ENCODE measurements at regions of chr7 and their contacts with region 1.

Region 1: GRCh38 chr7:140175221-140176121 is 1.3 kb downstream of the KDM7A start:
- DNase-seq: peak; percentile 91
- H3K4me3 ChIP-seq: peak overlapping the region; percentile 73
- H3K27ac ChIP-seq: peak overlapping the region; percentile 48
- H3K4me1 ChIP-seq: peaks cover 5% of the 10 kb centered on the region
- CTCF ChIP-seq: peak; percentile 94

Region 2: DNA sequence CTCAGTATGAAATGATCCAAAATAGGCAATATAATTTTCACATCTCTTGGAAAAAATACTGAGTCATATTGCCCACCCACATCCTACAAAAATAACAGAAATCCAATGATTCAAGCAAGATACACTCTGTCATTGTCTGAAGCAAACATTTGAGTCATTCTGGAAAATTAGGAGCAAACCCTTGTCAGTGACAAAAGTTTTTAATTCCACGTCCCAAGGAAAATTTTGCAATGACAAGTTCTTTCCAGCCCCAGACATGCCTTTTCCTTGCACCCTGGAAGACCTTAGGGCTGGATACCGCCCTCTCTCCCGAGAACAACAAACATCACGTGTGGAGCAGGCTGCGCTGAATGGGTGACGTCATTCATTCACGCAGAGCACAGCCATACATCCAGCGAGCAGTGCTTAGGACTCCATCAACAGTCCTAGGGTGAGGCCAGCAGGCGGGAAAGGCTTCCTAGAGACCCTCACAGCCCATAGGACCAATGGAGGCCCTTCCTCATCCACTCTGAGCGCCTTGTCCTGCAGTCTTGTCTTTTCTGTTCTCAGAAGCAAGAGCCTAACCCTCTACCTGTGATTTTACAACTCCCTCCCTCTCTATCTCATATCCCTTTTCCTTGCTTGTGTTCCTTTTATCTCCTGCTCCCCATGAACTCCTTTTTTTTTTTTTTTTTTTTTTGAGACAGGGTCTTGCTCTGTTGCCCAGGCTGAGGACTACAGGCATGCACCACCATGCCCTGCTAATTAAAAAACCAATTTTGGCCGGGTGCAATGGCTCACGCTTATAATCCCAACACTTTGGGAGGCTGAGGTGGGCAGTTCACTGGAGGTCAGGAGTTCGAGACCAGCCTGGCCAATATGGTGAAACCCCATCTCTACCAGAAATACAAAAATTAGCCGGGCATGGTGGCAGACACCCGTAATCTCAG is 24.9 kb after region 1 on chr7:
- CTCF ChIA-PET with region 1: no interaction called
- POLR2A ChIA-PET with region 1: no interaction called
- intact Hi-C with region 1: no loop called
- DNase-seq: no peak
- H3K4me3 ChIP-seq: no peak overlapping the region
- H3K27ac ChIP-seq: no peak overlapping the region
- H3K4me1 ChIP-seq: peaks cover 3% of the 10 kb centered on the region
- CTCF ChIP-seq: no peak

Region 3: DNA sequence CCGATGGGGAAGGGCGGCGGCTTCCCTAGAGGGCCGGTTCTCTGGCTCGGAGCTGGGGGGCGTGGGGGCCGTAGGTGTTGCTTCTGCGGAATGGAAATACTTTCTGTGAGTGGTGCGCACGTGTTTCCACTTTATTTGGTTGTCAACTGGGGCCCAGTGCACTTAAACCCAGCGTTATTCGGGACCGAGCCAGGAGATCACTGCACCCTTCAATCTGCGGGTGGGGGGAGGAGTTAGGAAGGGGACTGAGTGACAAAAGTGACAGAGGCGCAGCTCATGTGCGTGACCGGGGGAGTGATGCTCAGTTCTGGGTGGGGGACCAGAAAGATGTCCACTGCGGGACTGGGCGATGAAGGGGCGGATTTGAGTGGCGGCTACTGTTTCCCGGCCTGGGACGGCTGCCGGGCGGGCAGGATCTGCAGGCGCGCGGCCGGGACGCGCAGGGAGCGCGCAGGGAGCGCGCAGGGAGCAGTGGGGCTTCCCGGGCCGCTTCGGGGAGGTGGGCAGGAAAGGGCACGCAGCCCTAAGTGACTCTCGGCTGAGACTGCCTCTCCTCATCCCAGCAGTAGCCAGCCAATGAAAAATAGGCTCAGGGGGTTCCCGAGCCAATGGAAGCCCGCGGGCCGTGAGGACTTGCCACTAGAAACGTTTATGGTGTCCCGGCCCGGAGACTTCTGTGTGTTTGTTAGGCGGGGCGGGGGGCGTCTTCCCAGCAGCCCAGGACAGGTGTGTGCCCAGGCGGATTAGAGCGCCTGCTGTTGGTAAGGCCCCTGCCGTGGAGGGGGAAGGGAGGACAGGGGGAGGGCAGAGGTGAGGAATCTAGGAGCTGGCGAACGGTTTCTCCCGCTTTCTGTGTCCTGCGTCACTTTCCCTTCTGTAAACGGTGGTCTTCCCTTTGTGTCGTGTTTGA is 55.6 kb after region 1 on chr7:
- CTCF ChIA-PET with region 1: no interaction called
- POLR2A ChIA-PET with region 1: no interaction called
- intact Hi-C with region 1: loop called (anchors 5 kb)
- DNase-seq: no peak
- H3K4me3 ChIP-seq: no peak overlapping the region
- H3K27ac ChIP-seq: no peak overlapping the region
- H3K4me1 ChIP-seq: no peaks in the 10 kb centered on the region
- CTCF ChIP-seq: no peak

Region 4: GRCh38 chr7:140284062-140284461 is 108.6 kb after region 1 on chr7:
- CTCF ChIA-PET with region 1: no interaction called
- POLR2A ChIA-PET with region 1: no interaction called
- intact Hi-C with region 1: no loop called
- DNase-seq: no peak
- H3K4me3 ChIP-seq: no peak overlapping the region
- H3K27ac ChIP-seq: no peak overlapping the region
- H3K4me1 ChIP-seq: no peaks in the 10 kb centered on the region
- CTCF ChIP-seq: no peak

Region 5: GRCh38 chr7:140326116-140326928 is 150.9 kb after region 1 on chr7:
- CTCF ChIA-PET with region 1: no interaction called
- POLR2A ChIA-PET with region 1: no interaction called
- intact Hi-C with region 1: loop called (anchors 1 kb)
- DNase-seq: peak; percentile 60
- H3K4me3 ChIP-seq: no peak overlapping the region
- H3K27ac ChIP-seq: no peak overlapping the region
- H3K4me1 ChIP-seq: no peaks in the 10 kb centered on the region
- CTCF ChIP-seq: peak; percentile 79

Region 6: GRCh38 chr7:140390466-140391190 is 215.2 kb after region 1 on chr7:
- CTCF ChIA-PET with region 1: no interaction called
- POLR2A ChIA-PET with region 1: no interaction called
- intact Hi-C with region 1: loop called (anchors 5 kb)
- DNase-seq: peak; percentile 65
- H3K4me3 ChIP-seq: no peak overlapping the region
- H3K27ac ChIP-seq: no peak overlapping the region
- H3K4me1 ChIP-seq: peaks cover 20% of the 10 kb centered on the region
- CTCF ChIP-seq: no peak

Region 7: GRCh38 chr7:140494867-140495266 is 319.4 kb after region 1 on chr7:
- CTCF ChIA-PET with region 1: no interaction called
- POLR2A ChIA-PET with region 1: no interaction called
- intact Hi-C with region 1: loop called (anchors 1 kb)
- DNase-seq: no peak
- H3K4me3 ChIP-seq: no peak overlapping the region
- H3K27ac ChIP-seq: no peak overlapping the region
- H3K4me1 ChIP-seq: no peaks in the 10 kb centered on the region
- CTCF ChIP-seq: no peak